OCI-LY7 (cell line): ENCODE measurements at regions of chr3 and their contacts with region 1.

Region 1: DNA sequence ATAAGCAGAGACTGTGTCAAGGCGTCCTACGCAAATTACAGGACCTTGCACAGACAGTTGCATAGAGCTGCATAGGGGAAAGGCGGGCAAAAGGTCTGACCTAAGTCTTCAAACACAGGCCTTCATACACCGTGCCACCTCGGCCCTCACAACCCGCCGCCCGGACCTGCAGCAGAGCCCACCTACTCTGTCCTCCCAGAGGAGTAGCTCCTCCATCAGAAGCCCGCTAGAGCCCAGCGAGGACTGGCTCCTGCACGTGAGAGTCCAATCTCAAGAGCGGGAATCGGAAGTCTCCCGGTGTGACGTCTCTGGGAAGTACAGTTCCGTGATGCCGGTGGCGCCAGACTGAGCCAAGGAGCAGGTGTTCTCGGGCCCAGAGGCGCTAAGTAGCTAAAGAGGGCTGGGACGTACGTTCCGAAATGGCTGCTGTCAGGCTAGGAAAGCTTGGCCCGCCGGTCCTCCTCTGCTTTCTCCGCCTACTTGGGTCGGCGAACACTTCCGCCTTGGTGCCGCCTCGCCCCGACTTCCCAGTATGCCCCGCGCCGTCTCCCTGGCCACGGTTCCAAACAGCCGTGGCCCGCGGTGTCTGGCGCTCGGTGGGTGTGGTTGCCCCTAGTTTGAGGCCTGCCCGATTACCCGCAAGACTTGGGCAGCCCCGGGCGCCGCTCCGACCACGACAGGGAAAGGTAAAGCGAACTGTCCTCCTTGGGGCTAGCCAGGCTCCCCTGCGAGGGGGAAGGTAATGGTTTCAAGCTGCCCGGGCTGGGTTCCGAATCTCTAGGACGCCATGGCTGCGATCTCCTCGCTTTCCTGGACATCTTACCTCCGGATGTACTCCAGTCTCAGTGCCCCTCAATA is at the starts of genes ASTE1 and NEK11:
- DNase-seq: peak; percentile 86
- H3K4me3 ChIP-seq: peak within 1 kb of the TSS; percentile 75
- H3K27ac ChIP-seq: peak within 1 kb of the TSS; percentile 62
- H3K4me1 ChIP-seq: peaks cover 19% of the 10 kb centered on the region
- CTCF ChIP-seq: no peak
- total RNA-seq, gene ASTE1: 8.2 and 14.2 TPM in 2 replicates
- total RNA-seq, gene NEK11: 0.15 and 0.47 TPM in 2 replicates

Region 2: GRCh38 chr3:130425484-130425883 is 601.1 kb before region 1 on chr3:
- CTCF ChIA-PET with region 1: no interaction called
- POLR2A ChIA-PET with region 1: no interaction called
- intact Hi-C with region 1: no loop called
- DNase-seq: no peak
- H3K4me3 ChIP-seq: no peak overlapping the region
- H3K27ac ChIP-seq: no peak overlapping the region
- H3K4me1 ChIP-seq: no peaks in the 10 kb centered on the region
- CTCF ChIP-seq: no peak

Region 3: GRCh38 chr3:130746246-130747039 is 280.1 kb before region 1 on chr3 and contains the start of gene PIK3R4:
- CTCF ChIA-PET with region 1: no interaction called
- POLR2A ChIA-PET with region 1: interaction called, 4 read pairs
- intact Hi-C with region 1: loop called (anchors 5 kb)
- DNase-seq: peak; percentile 97
- H3K4me3 ChIP-seq: peak within 1 kb of the TSS; percentile 75
- H3K27ac ChIP-seq: peak within 1 kb of the TSS; percentile 45
- H3K4me1 ChIP-seq: peaks cover 42% of the 10 kb centered on the region
- CTCF ChIP-seq: no peak
- total RNA-seq, gene PIK3R4: 25.0 and 30.3 TPM in 2 replicates

Region 4: DNA sequence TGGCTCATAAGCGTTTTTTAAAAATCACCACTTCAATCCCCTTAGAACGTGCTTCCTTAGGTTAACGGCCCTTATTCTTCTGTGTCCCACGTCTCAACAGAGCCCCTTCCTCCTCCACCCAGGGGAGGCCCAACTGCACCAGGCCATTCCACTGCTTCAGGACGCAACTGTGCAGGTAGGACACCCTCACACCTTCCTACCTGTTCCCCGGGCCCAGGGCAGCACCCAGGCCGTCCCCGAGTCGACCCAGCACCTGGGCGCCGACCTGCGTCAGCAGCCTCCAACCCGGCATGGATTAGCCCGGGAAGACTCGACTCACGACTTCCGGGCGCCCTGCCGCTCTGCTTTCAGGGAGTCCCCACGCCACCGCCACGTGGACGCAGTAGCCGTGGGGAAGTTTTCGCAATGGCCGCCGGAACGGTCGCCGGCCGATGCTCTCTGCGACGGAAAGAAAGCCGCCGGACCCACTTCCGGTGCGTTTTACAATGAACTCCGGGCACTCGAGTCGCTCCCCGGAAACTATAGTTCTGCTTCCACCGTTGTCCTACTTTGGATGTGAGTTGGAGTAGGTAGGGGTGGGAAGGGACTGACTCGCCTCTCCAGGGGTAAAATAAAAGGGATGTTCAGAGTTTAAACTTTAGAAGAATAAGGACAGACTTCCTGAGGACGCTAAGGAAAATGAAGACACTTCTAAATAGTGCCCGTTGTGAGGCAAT is 476.1 kb after region 1 on chr3 and contains the start of gene MRPL3:
- CTCF ChIA-PET with region 1: no interaction called
- POLR2A ChIA-PET with region 1: no interaction called
- intact Hi-C with region 1: loop called (anchors 5 kb)
- DNase-seq: peak; percentile 92
- H3K4me3 ChIP-seq: peak within 1 kb of the TSS; percentile 99
- H3K27ac ChIP-seq: peak within 1 kb of the TSS; percentile 60
- H3K4me1 ChIP-seq: peaks cover 19% of the 10 kb centered on the region
- CTCF ChIP-seq: no peak
- total RNA-seq, gene MRPL3: 121 and 135 TPM in 2 replicates

Region 5: GRCh38 chr3:132029182-132029902 is 1002.8 kb after region 1 on chr3:
- CTCF ChIA-PET with region 1: no interaction called
- POLR2A ChIA-PET with region 1: no interaction called
- intact Hi-C with region 1: loop called (anchors 5 kb)
- DNase-seq: peak; percentile 63
- H3K4me3 ChIP-seq: no peak overlapping the region
- H3K27ac ChIP-seq: no peak overlapping the region
- H3K4me1 ChIP-seq: no peaks in the 10 kb centered on the region
- CTCF ChIP-seq: peak; percentile 93